ENCODE measurements at regions of chr4 and their contacts with region 1.

Region 1: GRCh38 chr4:159446266-159446976 is 343.5 kb downstream of the RAPGEF2 start:
- DNase-seq: peak; percentile 31 to 69 (median 48)
- ATAC-seq: peak; percentile 99
- H3K4me3 ChIP-seq: no peak overlapping the region
- H3K27ac ChIP-seq: no peak overlapping the region
- H3K4me1 ChIP-seq: no peaks in the 10 kb centered on the region
- H3K27me3 ChIP-seq: no peaks in the 10 kb centered on the region
- CTCF ChIP-seq: peak; percentile 70 to 85 (median 85)
- EP300 ChIP-seq: no peak
- POLR2A ChIP-seq: no peak
- RAD21 ChIP-seq: peak; percentile 84 to 89

Region 2: DNA sequence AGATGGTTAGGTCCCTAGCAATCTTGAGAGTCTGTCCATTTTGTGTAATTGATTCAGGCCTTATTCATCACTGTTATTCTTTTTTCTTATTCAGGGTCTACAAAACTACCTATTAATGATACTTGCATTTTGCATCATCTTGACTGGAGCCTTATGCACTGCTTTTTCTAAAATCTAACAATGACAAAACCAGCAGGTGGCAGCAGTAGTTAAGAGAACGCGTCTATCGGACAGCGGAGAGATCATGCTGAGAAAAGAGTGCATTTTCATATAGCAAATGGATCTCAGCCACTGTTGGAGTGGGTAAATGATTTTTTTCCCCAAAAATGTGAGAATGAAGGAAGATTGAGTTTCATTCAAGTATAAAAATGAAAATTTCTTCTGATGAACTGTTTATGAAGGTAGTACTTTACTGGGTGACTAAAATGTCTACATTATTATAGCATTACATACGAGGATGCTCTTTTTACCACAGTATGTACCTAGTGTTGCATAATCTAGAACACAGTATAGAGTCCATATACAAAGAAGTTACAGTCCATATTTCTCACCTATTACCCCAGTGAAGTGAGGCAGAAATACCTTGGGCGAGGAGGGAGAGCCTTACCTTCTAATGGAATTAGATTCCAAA is 1193.0 kb before region 1 on chr4:
- CTCF ChIA-PET with region 1: interaction called, 7 read pairs
- POLR2A ChIA-PET with region 1: no interaction called
- in situ Hi-C with region 1: loop called (anchors 25 kb)
- intact Hi-C with region 1: no loop called
- DNase-seq: peak in 2 of 4 experiments; percentile 38 to 69
- ATAC-seq: peak; percentile 94
- H3K4me3 ChIP-seq: no peak overlapping the region
- H3K27ac ChIP-seq: no peak overlapping the region
- H3K4me1 ChIP-seq: no peaks in the 10 kb centered on the region; a peak in 1 of 5 replicates
- H3K27me3 ChIP-seq: no peaks in the 10 kb centered on the region
- CTCF ChIP-seq: peak; percentile 56 to 70 (median 63); a peak in 5 of 6 replicates
- EP300 ChIP-seq: no peak
- POLR2A ChIP-seq: no peak
- RAD21 ChIP-seq: peak; percentile 58 to 66

Region 3: DNA sequence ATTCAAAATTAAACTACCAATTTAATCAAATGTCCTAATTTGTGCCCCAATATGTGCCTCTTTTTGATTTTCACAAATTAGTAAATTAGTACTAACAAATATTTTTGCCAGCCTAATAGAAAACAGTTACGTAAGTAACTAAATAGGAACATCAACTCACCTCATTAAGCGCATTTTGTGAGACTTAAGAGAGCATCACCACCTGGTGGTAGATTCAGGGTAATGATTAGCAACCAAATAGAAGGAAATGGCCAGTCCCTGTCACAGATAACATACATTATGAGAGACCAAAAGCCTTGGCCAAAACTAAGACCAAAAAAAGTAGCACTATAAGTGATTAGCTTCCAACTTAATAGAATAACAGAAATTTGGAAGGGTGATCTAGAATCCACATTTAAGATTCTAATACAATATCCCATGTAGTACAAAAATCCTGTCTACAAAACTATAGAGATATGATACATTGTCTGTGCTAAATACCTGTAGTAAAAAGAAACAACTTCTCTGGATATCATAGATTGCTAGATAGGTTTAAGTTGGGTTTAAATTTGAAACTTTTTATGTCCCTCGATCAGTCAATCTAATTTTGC is 821.4 kb before region 1 on chr4:
- CTCF ChIA-PET with region 1: no interaction called
- POLR2A ChIA-PET with region 1: no interaction called
- in situ Hi-C with region 1: no loop called
- intact Hi-C with region 1: loop called (anchors 10 kb)
- DNase-seq: peak; percentile 28 to 65 (median 46)
- ATAC-seq: peak; percentile 92
- H3K4me3 ChIP-seq: no peak overlapping the region
- H3K27ac ChIP-seq: no peak overlapping the region
- H3K4me1 ChIP-seq: no peaks in the 10 kb centered on the region
- H3K27me3 ChIP-seq: no peaks in the 10 kb centered on the region
- CTCF ChIP-seq: peak; percentile 60 to 76 (median 62); a peak in 5 of 6 replicates
- EP300 ChIP-seq: no peak
- POLR2A ChIP-seq: no peak
- RAD21 ChIP-seq: peak; percentile 85 to 89

Region 4: GRCh38 chr4:158856852-158857251 is 589.6 kb before region 1 on chr4:
- CTCF ChIA-PET with region 1: interaction called, 7 read pairs
- POLR2A ChIA-PET with region 1: no interaction called
- in situ Hi-C with region 1: loop called (anchors 10 kb)
- intact Hi-C with region 1: loop called (anchors 1 kb)
- DNase-seq: peak in 2 of 4 experiments; percentile 28 to 32
- ATAC-seq: peak; percentile 96
- H3K4me3 ChIP-seq: no peak overlapping the region
- H3K27ac ChIP-seq: no peak overlapping the region
- H3K4me1 ChIP-seq: no peaks in the 10 kb centered on the region
- H3K27me3 ChIP-seq: no peaks in the 10 kb centered on the region
- CTCF ChIP-seq: peak; percentile 55 to 80 (median 61); a peak in 5 of 6 replicates
- EP300 ChIP-seq: no peak
- POLR2A ChIP-seq: no peak
- RAD21 ChIP-seq: peak; percentile 90 to 92

Region 5: DNA sequence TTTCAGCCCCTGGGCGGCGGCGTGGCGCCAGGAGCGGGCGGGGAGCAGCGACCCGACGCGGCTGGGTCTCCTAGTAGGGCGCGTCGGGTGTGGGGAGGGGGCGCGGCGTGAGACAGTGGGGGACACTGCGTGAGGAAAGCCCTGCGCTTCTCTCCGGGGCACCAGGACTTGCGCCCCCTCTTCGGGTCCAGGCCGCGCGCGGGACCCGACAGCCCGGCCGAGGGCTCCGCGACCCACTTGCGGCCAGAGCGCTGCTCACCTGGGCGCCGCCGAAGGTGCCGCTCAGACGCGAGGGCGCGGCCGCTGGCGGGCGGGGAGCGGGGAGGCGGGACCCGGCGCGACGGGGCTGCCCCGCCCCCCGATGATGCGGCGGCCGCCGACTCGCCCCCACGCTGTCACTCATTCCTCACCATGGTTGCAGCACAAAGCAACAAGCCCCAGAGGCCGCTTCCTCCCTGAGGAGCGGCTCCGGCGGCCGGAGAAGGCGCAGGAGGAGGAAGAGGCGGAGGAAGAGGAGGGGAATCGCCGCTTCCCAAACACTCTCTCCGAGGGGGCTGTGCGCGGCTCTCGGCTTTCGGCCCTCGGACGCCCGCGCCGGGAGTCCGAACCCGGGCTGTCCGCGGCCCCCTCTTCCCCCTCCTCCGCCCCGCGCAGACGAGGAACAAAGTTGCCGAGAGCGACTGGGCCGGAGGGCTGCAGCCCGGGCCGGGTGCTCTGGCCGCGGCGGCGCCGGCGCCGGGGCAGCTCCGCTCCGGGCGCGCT is 343.6 kb before region 1 on chr4 and contains the start of gene RAPGEF2:
- CTCF ChIA-PET with region 1: no interaction called
- POLR2A ChIA-PET with region 1: no interaction called
- in situ Hi-C with region 1: no loop called
- intact Hi-C with region 1: loop called (anchors 10 kb)
- DNase-seq: peak; percentile 94 to 96 (median 94)
- ATAC-seq: peak; percentile 79
- H3K4me3 ChIP-seq: peak within 1 kb of the TSS; percentile 93
- H3K27ac ChIP-seq: peak within 1 kb of the TSS; percentile 83
- H3K4me1 ChIP-seq: peaks cover 13 to 31% of the 10 kb centered on the region in 2 experiments
- H3K27me3 ChIP-seq: no peaks in the 10 kb centered on the region
- CTCF ChIP-seq: 0 out of 6 replicates have a peak, but pooled peaks of 1 of the 3 experiments have one; percentile 5
- EP300 ChIP-seq: no peak
- POLR2A ChIP-seq: peak; percentile 76
- RAD21 ChIP-seq: no peak
- polyA plus RNA-seq, gene RAPGEF2: 3.1 to 3.4 TPM

Region 6: DNA sequence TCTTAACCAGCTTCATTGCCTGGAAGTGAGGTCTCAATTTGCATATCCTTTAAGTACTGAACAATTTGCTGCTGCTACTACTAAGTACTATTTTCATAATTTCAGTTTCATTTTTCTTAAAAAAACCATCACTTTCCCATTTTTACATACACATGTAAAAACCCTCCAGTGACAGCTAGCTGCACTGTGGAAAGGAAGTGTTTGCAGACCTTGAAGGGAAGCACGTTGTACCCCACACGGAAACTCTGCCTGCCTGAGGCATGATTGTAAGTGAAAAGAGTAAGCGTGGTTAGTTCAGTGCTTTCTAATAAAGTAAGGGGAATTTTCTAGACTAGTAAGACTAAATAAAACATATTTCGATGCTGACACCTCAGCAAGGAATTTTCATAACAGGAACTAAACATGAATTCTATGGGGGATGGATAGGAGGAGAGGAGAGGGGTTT is 240.0 kb before region 1 on chr4:
- CTCF ChIA-PET with region 1: no interaction called
- POLR2A ChIA-PET with region 1: no interaction called
- in situ Hi-C with region 1: loop called (anchors 10 kb)
- intact Hi-C with region 1: loop called (anchors 2 kb)
- DNase-seq: no peak
- ATAC-seq: no peak
- H3K4me3 ChIP-seq: no peak overlapping the region
- H3K27ac ChIP-seq: no peak overlapping the region
- H3K4me1 ChIP-seq: no peaks in the 10 kb centered on the region; a peak in 1 of 5 replicates
- H3K27me3 ChIP-seq: no peaks in the 10 kb centered on the region
- CTCF ChIP-seq: no peak
- EP300 ChIP-seq: no peak
- POLR2A ChIP-seq: no peak
- RAD21 ChIP-seq: no peak